Transverse colon (tissue), 4 donors: ENCODE measurements at regions of chr12 and their contacts with region 1.

Region 1: DNA sequence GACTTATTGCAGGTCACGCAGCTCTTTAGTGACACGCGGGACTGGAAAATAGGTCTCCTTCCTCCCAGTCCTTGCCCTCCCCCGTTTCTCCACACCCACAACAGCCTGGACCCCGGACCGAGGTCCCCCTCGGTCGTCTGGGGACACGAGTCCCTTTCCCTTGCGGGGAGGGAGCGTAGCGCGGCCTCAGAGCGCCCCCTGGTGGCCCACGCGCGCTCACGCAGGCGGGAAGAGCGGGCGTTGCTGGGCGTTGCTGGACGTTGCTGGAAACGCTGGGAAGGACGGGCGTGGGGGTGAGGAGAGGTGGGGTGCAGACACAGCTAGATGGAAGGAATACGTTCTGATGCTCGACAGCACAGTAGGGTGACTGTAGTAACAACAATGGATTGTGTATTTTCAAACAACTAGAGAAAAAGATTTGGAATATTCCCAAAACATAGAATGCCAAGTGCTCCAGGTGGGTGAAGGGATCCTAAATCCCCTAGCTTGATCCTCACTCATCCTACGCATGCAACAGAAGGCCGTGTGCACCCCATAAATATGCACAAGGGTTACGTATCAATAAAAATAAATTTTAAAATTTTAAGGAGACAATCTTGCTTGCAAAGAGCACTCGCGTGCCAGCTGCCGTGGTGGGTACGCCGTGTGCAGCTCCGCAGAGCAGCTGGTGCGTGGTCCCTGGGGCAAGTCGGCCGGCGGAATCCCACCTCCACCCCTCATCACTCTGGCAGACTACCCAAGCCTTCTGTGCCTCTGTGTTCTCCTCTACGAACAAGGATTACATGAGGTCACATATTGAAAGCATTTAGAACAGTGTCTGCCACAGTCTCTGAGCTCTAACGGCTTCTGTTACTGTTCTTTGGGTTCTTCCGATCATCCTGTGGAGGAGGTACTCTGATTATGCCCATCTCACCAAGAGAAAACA is 87.4 kb downstream of the B4GALNT3 start:
- DNase-seq: peak; percentile 73
- H3K4me3 ChIP-seq: no peak overlapping the region
- H3K27ac ChIP-seq: no peak overlapping the region
- H3K4me1 ChIP-seq: peaks cover 0 to 8% (median 3%) of the 10 kb centered on the region in 4 donors
- H3K27me3 ChIP-seq: peaks cover 7% of the 10 kb centered on the region
- CTCF ChIP-seq: peak; percentile 96 to 100 (median 99)
- EP300 ChIP-seq: no peak
- POLR2A ChIP-seq: no peak

Region 2: DNA sequence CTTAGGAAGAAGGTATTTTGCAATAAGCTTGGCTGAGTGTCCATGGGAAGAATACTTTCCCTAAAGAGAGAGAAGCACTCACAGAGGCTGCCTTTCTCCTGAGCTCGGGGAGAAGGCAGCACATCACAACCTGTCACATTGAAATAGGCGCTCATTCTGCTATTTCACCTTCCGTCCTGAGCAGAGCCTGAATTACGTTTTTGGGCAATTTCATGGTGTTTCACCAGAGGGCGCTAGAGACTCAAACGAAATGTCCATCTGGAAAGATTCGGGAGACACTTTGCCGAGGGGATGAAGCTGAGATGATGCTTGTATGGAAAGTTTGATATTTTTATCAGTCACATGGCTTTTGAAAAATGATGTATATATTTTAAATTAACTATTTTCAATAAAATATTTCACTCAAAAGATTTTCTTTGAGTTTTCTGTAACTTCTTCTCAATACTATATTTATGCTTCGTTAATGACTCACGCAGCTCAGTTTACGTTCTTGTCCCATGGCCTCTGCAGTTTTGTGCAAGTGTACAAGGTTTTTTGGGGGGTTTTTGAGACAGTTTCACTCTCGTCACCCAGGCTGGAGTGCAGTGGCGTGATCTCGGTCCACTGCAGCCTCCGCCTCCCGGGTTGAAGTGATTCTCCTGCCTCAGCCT is 104.8 kb before region 1 on chr12:
- in situ Hi-C with region 1: loop called in 2 of 4 experiments (anchors 5 to 10 kb)
- intact Hi-C with region 1: loop called (anchors 5 kb)
- DNase-seq: peak; percentile 46
- H3K4me3 ChIP-seq: no peak overlapping the region
- H3K27ac ChIP-seq: no peak overlapping the region
- H3K4me1 ChIP-seq: no peaks in the 10 kb centered on the region
- H3K27me3 ChIP-seq: no peaks in the 10 kb centered on the region
- CTCF ChIP-seq: peak; percentile 71 to 80 (median 73)
- EP300 ChIP-seq: no peak
- POLR2A ChIP-seq: no peak

Region 3: DNA sequence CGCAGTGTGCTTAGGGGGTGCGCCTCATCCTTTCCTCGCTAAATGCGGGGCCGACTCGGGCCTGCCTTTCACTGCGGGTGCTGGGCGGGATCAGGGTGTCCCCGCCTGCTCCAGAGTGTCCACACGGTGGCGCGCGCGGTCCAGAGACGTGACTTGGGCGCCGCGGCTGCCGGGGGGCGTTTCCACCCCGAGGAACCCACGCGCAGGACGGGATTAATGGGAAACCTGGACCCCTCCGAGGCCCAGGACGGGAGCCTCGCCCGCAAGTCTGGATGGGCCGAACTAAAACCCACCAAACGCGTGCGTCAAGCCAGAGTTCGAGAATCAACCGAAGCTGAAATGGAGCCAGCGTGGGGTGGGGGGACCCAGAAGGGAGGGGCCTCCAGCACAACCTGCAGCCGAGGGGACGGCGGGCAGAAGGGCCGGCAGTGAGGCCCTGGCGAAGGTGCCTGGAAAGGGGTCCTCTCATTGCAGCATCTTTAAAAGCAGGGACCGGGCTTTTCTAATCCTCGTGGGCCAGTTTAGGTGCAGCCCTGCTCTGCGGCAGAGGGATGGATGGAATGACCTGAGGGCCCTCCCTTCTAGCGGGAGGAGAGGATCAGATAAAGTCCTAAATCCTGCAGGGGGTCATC is 22.7 kb after region 1 on chr12:
- in situ Hi-C with region 1: no loop called
- intact Hi-C with region 1: no loop called
- DNase-seq: peak; percentile 92
- H3K4me3 ChIP-seq: peak overlapping the region; percentile 51 to 73 (median 64)
- H3K27ac ChIP-seq: peak overlapping the region; percentile 93 to 95 (median 94)
- H3K4me1 ChIP-seq: peaks cover 6 to 46% (median 32%) of the 10 kb centered on the region in 4 donors
- H3K27me3 ChIP-seq: no peaks in the 10 kb centered on the region
- CTCF ChIP-seq: peak; percentile 90 to 96 (median 94)
- EP300 ChIP-seq: no peak
- POLR2A ChIP-seq: no peak